Transverse colon (tissue), 4 donors: ENCODE measurements at regions of chr1 and their contacts with region 1.

Region 1: GRCh38 chr1:216075339-216075738 is 347.9 kb downstream of the USH2A start:
- DNase-seq: no peak
- H3K4me3 ChIP-seq: no peak overlapping the region
- H3K27ac ChIP-seq: no peak overlapping the region
- H3K4me1 ChIP-seq: no peaks in the 10 kb centered on the region
- H3K27me3 ChIP-seq: no peaks in the 10 kb centered on the region
- CTCF ChIP-seq: no peak
- EP300 ChIP-seq: no peak
- POLR2A ChIP-seq: no peak

Region 2: GRCh38 chr1:216034504-216034903 is 40.8 kb before region 1 on chr1:
- in situ Hi-C with region 1: no loop called
- intact Hi-C with region 1: loop called (anchors 1 kb)
- DNase-seq: no peak
- H3K4me3 ChIP-seq: no peak overlapping the region
- H3K27ac ChIP-seq: no peak overlapping the region
- H3K4me1 ChIP-seq: no peaks in the 10 kb centered on the region
- H3K27me3 ChIP-seq: no peaks in the 10 kb centered on the region
- CTCF ChIP-seq: no peak
- EP300 ChIP-seq: no peak
- POLR2A ChIP-seq: no peak